Dorsolateral prefrontal cortex (tissue), 120 donors: ENCODE measurements at regions of chr22 and their contacts with region 1.

Region 1: GRCh38 chr22:30005213-30005857 is 74.9 kb upstream of the HORMAD2 start:
- DNase-seq: peak in 9 of 10 donors; percentile 47 to 84 (median 70)
- H3K4me3 ChIP-seq: no peak overlapping the region
- H3K27ac ChIP-seq: peak overlapping the region in 13 of 59 donors; percentile 0 to 29 (median 15)
- H3K27me3 ChIP-seq: no peaks in the 10 kb centered on the region
- CTCF ChIP-seq: peak; percentile 83 to 99 (median 94)

Region 2: GRCh38 chr22:29635734-29636357 is 369.5 kb before region 1 on chr22:
- intact Hi-C with region 1: loop called in 1 of 2 experiments (anchors 10 kb)
- DNase-seq: peak in 1 of 10 donors; percentile 34
- H3K4me3 ChIP-seq: no peak overlapping the region
- H3K27ac ChIP-seq: no peak overlapping the region
- H3K27me3 ChIP-seq: no peaks in the 10 kb centered on the region
- CTCF ChIP-seq: peak; percentile 51 to 86 (median 70)

Region 3: GRCh38 chr22:29689880-29690213 is 315.5 kb before region 1 on chr22:
- intact Hi-C with region 1: loop called in 1 of 2 experiments (anchors 1 kb)
- DNase-seq: peak; percentile 64 to 87 (median 79)
- H3K4me3 ChIP-seq: no peak overlapping the region
- H3K27ac ChIP-seq: peak overlapping the region in 31 of 59 donors; percentile 4 to 65 (median 36)
- H3K27me3 ChIP-seq: no peaks in the 10 kb centered on the region
- CTCF ChIP-seq: peak; percentile 61 to 92 (median 86)

Region 4: GRCh38 chr22:29772170-29772641 is 233.1 kb before region 1 on chr22:
- intact Hi-C with region 1: loop called in 1 of 2 experiments (anchors 10 kb)
- DNase-seq: peak in 3 of 10 donors; percentile 40 to 61 (median 45)
- H3K4me3 ChIP-seq: no peak overlapping the region
- H3K27ac ChIP-seq: peak overlapping the region in 3 of 59 donors; percentile 13 to 48 (median 41)
- H3K27me3 ChIP-seq: no peaks in the 10 kb centered on the region
- CTCF ChIP-seq: peak in 31 of 56 donors; percentile 6 to 40 (median 23)

Region 5: GRCh38 chr22:29837780-29838598 is 167.3 kb before region 1 on chr22 and contains the start of gene ASCC2:
- intact Hi-C with region 1: loop called in 1 of 2 experiments (anchors 10 kb)
- DNase-seq: peak; percentile 94 to 99 (median 97)
- H3K4me3 ChIP-seq: peak within 1 kb of the TSS; percentile 65 to 100 (median 94)
- H3K27ac ChIP-seq: peak within 1 kb of the TSS in 55 of 59 donors; percentile 2 to 90 (median 74)
- H3K27me3 ChIP-seq: no peaks in the 10 kb centered on the region
- CTCF ChIP-seq: peak in 36 of 56 donors; percentile 5 to 56 (median 29)
- total RNA-seq, gene ASCC2: 22.5 to 65.4 (median 35.4) TPM

Region 6: GRCh38 chr22:29883045-29883774 is 122.1 kb before region 1 on chr22 and contains the start of gene MTMR3:
- intact Hi-C with region 1: loop called in 1 of 2 experiments (anchors 2 kb)
- DNase-seq: peak; percentile 85 to 96 (median 92)
- H3K4me3 ChIP-seq: peak within 1 kb of the TSS; percentile 72 to 100 (median 93)
- H3K27ac ChIP-seq: peak within 1 kb of the TSS; percentile 73 to 99 (median 96)
- H3K27me3 ChIP-seq: no peaks in the 10 kb centered on the region
- CTCF ChIP-seq: peak in 51 of 56 donors; percentile 17 to 73 (median 47)
- total RNA-seq, gene MTMR3: 45.6 to 93.4 (median 62.5) TPM

Region 7: DNA sequence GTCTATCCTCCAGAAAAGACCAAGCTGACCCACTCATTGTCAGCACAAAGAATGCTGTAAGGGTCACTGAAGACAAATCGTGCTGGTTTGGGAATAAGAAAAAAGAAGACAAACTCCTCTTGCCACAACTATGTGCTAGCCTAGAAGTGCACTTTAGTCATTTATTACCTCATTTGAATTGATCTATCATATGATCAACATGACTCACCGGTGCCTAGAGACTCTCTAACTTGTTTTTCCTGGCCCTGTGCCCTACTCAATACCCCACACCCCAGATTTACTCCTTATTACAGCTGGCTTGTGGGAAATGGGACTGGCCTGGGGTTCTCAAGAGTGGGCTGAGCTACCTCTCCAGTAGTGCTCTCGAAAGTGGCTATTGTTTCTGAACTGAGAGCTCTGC is 39.0 kb after region 1 on chr22:
- intact Hi-C with region 1: no loop called
- DNase-seq: no peak
- H3K4me3 ChIP-seq: no peak overlapping the region
- H3K27ac ChIP-seq: no peak overlapping the region
- H3K27me3 ChIP-seq: no peaks in the 10 kb centered on the region
- CTCF ChIP-seq: no peak

Region 8: GRCh38 chr22:30062950-30063349 is 57.6 kb after region 1 on chr22:
- intact Hi-C with region 1: no loop called
- DNase-seq: no peak
- H3K4me3 ChIP-seq: no peak overlapping the region
- H3K27ac ChIP-seq: no peak overlapping the region
- H3K27me3 ChIP-seq: peaks cover 0 to 2% (median 0%) of the 10 kb centered on the region in 45 donors
- CTCF ChIP-seq: no peak

Region 9: GRCh38 chr22:30079952-30080533 is 74.7 kb after region 1 on chr22 and contains the start of gene HORMAD2:
- intact Hi-C with region 1: loop called in 1 of 2 experiments (anchors 10 kb)
- DNase-seq: peak in 5 of 10 donors; percentile 19 to 64 (median 44)
- H3K4me3 ChIP-seq: peak within 1 kb of the TSS in 57 of 59 donors; percentile 6 to 66 (median 46)
- H3K27ac ChIP-seq: peak within 1 kb of the TSS in 1 of 59 donors; percentile 18
- H3K27me3 ChIP-seq: peaks cover 0 to 18% (median 4%) of the 10 kb centered on the region in 45 donors
- CTCF ChIP-seq: no peak
- total RNA-seq, gene HORMAD2: 0.20 to 2.0 (median 0.59) TPM in 46 of 120 experiments, not detected in the others